ENCODE measurements at regions of chr14 and their contacts with region 1.

Region 1: GRCh38 chr14:61025251-61026223 is 44.5 kb downstream of the SLC38A6 start:
- DNase-seq: peak; percentile 80
- ATAC-seq: peak; percentile 81
- H3K4me3 ChIP-seq: no peak overlapping the region
- H3K27ac ChIP-seq: peak overlapping the region; percentile 24; the same call in 1 of the 2 replicates
- H3K4me1 ChIP-seq: peaks cover 3% of the 10 kb centered on the region; the same call in 1 of the 2 replicates
- H3K27me3 ChIP-seq: no peaks in the 10 kb centered on the region
- CTCF ChIP-seq: peak; percentile 84
- POLR2A ChIP-seq: no peak
- RAD21 ChIP-seq: peak; percentile 81

Region 2: DNA sequence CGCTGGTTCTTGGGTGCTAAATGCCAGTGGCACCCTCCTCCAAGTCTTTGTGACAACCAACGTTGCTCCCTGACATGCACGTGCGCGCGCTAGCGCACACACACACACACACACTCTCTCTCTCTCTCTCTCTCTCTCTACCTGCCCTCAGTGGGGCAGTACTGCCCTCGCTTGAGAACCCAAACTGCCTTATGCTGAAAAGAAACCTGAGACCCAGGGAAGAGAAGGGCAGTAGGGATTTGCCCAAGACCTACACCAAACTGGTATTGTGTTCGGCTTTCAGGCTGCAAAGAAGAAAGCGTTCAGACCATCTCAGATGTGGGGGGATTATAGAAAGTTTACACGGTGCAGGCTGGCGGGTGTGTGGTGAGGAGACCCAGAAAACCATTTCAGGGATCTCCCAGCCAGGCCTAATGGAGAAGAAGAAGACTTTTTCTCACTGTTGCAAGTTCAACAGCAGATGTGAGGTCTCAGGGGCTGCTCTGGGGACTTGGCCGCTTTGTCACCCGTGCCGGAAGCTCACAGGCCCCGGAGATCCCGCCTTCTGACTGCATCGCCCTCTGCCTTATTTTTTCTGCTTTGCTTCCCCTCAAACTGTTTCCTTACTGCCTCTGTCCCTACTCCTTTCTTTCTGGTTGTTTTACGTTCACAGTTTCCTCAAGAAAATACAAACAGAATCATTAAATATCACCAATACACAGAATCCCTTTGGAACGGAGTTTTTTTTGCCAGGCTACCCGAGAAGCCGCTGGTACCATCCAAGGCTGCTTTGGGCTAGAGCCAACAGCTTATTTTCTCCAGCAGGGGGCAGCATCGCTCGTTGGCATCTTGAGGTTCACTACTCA is 694.1 kb before region 1 on chr14:
- CTCF ChIA-PET with region 1: no interaction called
- POLR2A ChIA-PET with region 1: no interaction called
- dilution Hi-C with region 1: no loop called
- in situ Hi-C with region 1: loop called (anchors 25 kb)
- intact Hi-C with region 1: no loop called
- DNase-seq: peak; percentile 37
- ATAC-seq: peak; percentile 72
- H3K4me3 ChIP-seq: peak overlapping the region; percentile 36
- H3K27ac ChIP-seq: no peak overlapping the region
- H3K4me1 ChIP-seq: no peaks in the 10 kb centered on the region; the same call in 1 of the 2 replicates
- H3K27me3 ChIP-seq: peaks cover 28% of the 10 kb centered on the region
- CTCF ChIP-seq: peak; percentile 62
- POLR2A ChIP-seq: no peak
- RAD21 ChIP-seq: peak; percentile 48

Region 3: GRCh38 chr14:60724137-60724619 is 301.4 kb before region 1 on chr14 and contains the start of gene SIX4:
- CTCF ChIA-PET with region 1: no interaction called
- POLR2A ChIA-PET with region 1: no interaction called
- dilution Hi-C with region 1: no loop called
- in situ Hi-C with region 1: no loop called
- intact Hi-C with region 1: loop called (anchors 1 kb)
- DNase-seq: peak; percentile 92
- ATAC-seq: peak; percentile 81
- H3K4me3 ChIP-seq: peak within 1 kb of the TSS; percentile 71
- H3K27ac ChIP-seq: peak within 1 kb of the TSS; percentile 78
- H3K4me1 ChIP-seq: peaks cover 10% of the 10 kb centered on the region
- H3K27me3 ChIP-seq: no peaks in the 10 kb centered on the region
- CTCF ChIP-seq: no peak
- POLR2A ChIP-seq: peak; percentile 82
- RAD21 ChIP-seq: peak; percentile 6; the same call in 1 of the 2 replicates
- total RNA-seq, gene SIX4: 28.1 and 42.7 TPM in 2 replicates

Region 4: DNA sequence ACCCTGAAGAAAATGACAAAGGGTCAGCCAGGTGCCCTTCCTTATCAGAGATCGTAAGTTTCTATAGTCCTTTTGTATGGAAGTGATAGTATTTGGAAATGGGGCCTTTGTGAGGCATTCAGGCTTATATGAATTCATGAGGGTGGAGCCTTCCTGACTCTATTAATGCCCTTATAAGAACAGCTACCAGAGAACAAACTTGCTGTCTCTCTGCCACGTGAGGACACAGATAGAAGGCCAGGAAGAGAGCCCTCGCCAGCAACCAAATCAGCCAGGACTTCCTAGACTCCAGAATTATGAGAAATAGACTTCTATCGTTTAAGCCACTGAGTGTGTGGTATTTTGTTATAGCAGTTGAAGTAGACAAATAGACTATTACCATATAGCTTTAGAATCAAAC is 81.3 kb before region 1 on chr14:
- CTCF ChIA-PET with region 1: no interaction called
- POLR2A ChIA-PET with region 1: no interaction called
- dilution Hi-C with region 1: no loop called
- in situ Hi-C with region 1: no loop called
- intact Hi-C with region 1: no loop called
- DNase-seq: no peak
- ATAC-seq: peak; percentile 32; the same call in 1 of the 2 replicates
- H3K4me3 ChIP-seq: no peak overlapping the region
- H3K27ac ChIP-seq: peak overlapping the region; percentile 73; the same call in 1 of the 2 replicates
- H3K4me1 ChIP-seq: peaks cover 7% of the 10 kb centered on the region
- H3K27me3 ChIP-seq: no peaks in the 10 kb centered on the region
- CTCF ChIP-seq: no peak
- POLR2A ChIP-seq: no peak
- RAD21 ChIP-seq: no peak

Region 5: DNA sequence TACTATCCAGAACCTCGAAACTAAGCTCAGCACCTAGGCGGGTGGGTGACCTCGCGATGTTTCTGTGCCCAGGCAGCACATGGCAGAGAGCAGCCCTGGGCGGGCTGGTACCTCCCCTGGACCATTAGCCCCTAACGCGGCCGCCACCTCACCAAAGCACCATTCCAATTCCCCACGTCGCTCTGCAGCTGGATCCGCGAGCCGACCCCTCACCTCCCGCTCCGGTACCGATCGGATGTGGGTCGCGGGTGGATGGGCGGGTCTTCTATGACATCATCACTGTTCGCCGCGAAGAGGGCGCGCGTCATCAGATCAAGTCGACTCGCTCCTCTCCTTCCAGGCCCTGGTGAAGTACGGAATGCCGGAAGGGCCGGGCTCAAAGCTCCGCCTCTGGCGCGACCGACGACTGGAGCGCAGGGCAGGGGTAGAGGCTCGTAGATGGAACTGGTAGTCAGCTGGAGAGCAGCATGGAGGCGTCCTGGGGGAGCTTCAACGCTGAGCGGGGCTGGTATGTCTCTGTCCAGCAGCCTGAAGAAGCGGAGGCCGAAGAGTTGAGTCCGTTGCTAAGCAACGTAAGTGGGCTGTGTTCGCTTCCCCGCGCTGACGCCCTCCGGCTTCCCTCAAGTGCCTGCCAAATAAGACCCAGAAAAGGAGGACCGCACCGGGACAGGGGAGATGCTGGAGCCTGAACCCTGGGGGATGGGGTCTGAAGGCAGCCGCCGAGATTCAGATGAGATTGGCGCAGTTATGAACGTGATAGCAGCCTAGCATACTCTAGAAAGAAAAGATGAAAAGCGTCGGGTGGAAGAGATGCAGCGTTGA is 44.5 kb before region 1 on chr14 and contains the starts of genes SLC38A6 and TRMT5:
- CTCF ChIA-PET with region 1: no interaction called
- POLR2A ChIA-PET with region 1: no interaction called
- dilution Hi-C with region 1: no loop called
- in situ Hi-C with region 1: no loop called
- intact Hi-C with region 1: loop called (anchors 5 kb)
- DNase-seq: peak; percentile 97
- ATAC-seq: peak; percentile 95
- H3K4me3 ChIP-seq: peak within 1 kb of the TSS; percentile 83
- H3K27ac ChIP-seq: peak within 1 kb of the TSS; percentile 89
- H3K4me1 ChIP-seq: no peaks in the 10 kb centered on the region; the same call in 1 of the 2 replicates
- H3K27me3 ChIP-seq: no peaks in the 10 kb centered on the region
- CTCF ChIP-seq: no peak
- POLR2A ChIP-seq: peak; percentile 83
- RAD21 ChIP-seq: peak; percentile 28
- total RNA-seq, gene SLC38A6: 18.3 and 38.9 TPM in 2 replicates
- total RNA-seq, gene TRMT5: 10.4 and 15.6 TPM in 2 replicates

Region 6: GRCh38 chr14:61188978-61189808 is 163.7 kb after region 1 on chr14:
- CTCF ChIA-PET with region 1: no interaction called
- POLR2A ChIA-PET with region 1: no interaction called
- dilution Hi-C with region 1: no loop called
- in situ Hi-C with region 1: no loop called
- intact Hi-C with region 1: loop called (anchors 10 kb)
- DNase-seq: peak; percentile 51
- ATAC-seq: peak; percentile 48; the same call in 1 of the 2 replicates
- H3K4me3 ChIP-seq: no peak overlapping the region
- H3K27ac ChIP-seq: peak overlapping the region; percentile 79
- H3K4me1 ChIP-seq: peaks cover 31% of the 10 kb centered on the region
- H3K27me3 ChIP-seq: no peaks in the 10 kb centered on the region
- CTCF ChIP-seq: peak; percentile 51
- POLR2A ChIP-seq: no peak
- RAD21 ChIP-seq: peak; percentile 54